Activated B cell treated with CpG ODN at 0.5 μM for 24 hours (primary cell): ENCODE measurements at regions of chr22 and their contacts with region 1.

Region 1: DNA sequence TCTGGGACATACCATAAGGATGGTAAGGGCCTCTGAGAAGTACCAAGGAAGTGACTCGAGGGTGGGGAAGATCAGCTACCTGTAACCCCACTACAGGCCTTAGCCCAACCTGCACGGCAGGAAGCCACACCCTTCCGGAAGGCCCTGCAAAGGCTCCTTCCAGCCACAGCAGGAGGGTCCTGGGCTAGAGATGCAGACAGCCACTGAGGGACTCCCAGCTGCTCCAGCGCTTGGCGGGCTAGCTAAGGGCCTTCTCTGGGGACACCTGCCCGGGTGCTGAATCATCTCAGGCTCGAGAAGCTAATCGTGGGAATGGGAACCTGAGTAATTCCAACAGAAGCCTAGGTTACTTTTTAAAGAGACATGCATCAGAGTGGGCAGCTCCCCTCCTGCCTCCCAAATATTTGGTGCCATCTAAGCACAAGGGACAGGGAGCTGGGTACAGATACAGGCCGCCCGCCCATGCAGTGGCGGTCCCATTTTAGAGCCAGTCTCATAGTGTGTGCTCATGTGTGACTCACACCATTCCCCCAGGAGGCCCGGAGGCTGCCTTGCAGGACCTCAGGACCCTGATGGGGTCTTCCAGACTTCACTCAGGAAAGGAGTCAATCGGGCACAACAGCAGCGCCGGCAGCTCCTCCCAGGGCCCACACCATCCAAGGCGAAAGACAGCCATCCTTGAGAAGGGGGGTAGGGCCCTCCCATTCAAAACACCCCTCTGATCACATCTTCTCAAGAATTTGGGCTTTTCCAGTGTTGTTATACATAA is 8.0 kb downstream of the MYH9 start:
- DNase-seq: no peak
- ATAC-seq: peak; percentile 52
- H3K4me3 Mint-ChIP-seq: peak overlapping the region; percentile 59
- H3K27ac Mint-ChIP-seq: peak overlapping the region; percentile 92
- H3K4me1 Mint-ChIP-seq: peaks cover 95% of the 10 kb centered on the region
- H3K27me3 Mint-ChIP-seq: no peaks in the 10 kb centered on the region
- CTCF ChIP-seq: no peak

Region 2: GRCh38 chr22:36347094-36347493 is 32.7 kb before region 1 on chr22:
- CTCF ChIA-PET with region 1: no interaction called
- POLR2A ChIA-PET with region 1: interaction called, 13 read pairs
- intact Hi-C with region 1: no loop called
- DNase-seq: no peak
- ATAC-seq: no peak
- H3K4me3 Mint-ChIP-seq: no peak overlapping the region
- H3K27ac Mint-ChIP-seq: peak overlapping the region; percentile 41
- H3K4me1 Mint-ChIP-seq: peaks cover 56% of the 10 kb centered on the region
- H3K27me3 Mint-ChIP-seq: no peaks in the 10 kb centered on the region
- CTCF ChIP-seq: no peak

Region 3: DNA sequence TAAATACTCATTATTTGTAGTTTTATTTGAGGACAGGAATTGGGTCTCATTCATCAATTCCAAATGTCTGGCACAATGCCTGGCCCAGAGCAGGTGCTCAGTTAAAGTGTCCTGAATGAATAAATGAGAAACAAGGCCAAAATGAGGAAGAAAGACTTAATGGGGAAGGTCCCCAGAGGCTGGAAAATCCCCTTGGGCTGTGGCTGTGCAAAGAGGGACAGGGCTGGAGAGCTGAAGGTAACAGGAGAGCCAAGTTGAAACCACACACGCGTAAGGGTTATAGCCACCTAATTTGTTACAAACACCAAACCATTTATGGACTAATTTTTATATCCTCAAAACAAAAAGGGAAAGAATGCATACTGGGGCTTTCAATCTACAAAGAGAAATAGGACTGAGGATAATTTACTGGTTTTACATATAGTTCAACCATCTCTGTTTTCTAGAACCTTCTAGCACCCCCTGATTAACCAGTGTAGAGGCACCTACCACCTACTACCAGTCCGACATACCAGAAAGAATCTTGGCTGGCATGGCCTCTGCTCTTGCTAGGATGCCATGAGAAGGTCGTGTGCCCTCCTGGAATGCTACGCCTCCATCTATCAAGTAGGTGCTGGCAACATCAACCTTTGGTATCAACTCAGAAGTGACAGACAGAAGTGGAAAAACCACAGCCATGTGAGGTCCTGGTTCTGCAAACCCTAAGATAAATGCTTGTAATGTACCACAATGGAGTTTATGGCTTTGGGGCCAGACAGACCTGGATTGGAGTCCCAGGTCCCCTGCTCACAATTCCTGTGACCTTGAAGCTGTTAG is 20.4 kb before region 1 on chr22:
- CTCF ChIA-PET with region 1: interaction called, 4 read pairs
- POLR2A ChIA-PET with region 1: interaction called, 31 read pairs
- intact Hi-C with region 1: no loop called
- DNase-seq: peak; percentile 59
- ATAC-seq: peak; percentile 85
- H3K4me3 Mint-ChIP-seq: peak overlapping the region; percentile 72
- H3K27ac Mint-ChIP-seq: peak overlapping the region; percentile 95
- H3K4me1 Mint-ChIP-seq: peaks cover 99% of the 10 kb centered on the region
- H3K27me3 Mint-ChIP-seq: no peaks in the 10 kb centered on the region
- CTCF ChIP-seq: no peak

Region 4: DNA sequence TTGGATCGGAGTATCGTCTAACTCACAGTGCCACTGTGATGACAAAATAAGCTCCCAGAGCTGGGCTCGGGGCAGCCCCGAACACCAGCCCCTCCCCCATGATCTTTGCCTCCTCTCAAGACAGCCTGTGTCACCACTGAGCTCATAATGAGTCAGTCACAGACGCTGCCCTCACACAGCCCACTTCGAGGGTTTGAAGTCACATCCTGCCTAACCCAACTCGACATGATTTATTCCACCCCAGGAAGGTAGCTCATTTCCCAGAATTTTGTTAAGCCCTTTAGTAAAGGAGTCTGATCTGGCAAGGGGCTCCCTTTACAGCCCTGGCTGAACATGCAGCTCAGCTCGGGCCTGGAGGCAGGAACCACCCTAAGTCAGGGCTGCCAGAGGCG is 14.8 kb before region 1 on chr22:
- CTCF ChIA-PET with region 1: interaction called, 4 read pairs
- POLR2A ChIA-PET with region 1: interaction called, 126 read pairs
- intact Hi-C with region 1: loop called (anchors 1 kb)
- DNase-seq: peak; percentile 51
- ATAC-seq: peak; percentile 96
- H3K4me3 Mint-ChIP-seq: peak overlapping the region; percentile 68
- H3K27ac Mint-ChIP-seq: peak overlapping the region; percentile 82
- H3K4me1 Mint-ChIP-seq: peaks cover 97% of the 10 kb centered on the region
- H3K27me3 Mint-ChIP-seq: no peaks in the 10 kb centered on the region
- CTCF ChIP-seq: no peak

Region 5: GRCh38 chr22:36613958-36614357 is 234.2 kb after region 1 on chr22:
- CTCF ChIA-PET with region 1: no interaction called
- POLR2A ChIA-PET with region 1: no interaction called
- intact Hi-C with region 1: no loop called
- DNase-seq: no peak
- ATAC-seq: no peak
- H3K4me3 Mint-ChIP-seq: no peak overlapping the region
- H3K27ac Mint-ChIP-seq: no peak overlapping the region
- H3K4me1 Mint-ChIP-seq: no peaks in the 10 kb centered on the region
- H3K27me3 Mint-ChIP-seq: peaks cover 47% of the 10 kb centered on the region
- CTCF ChIP-seq: no peak